ENCODE measurements at regions of chr6 and their contacts with region 1.

Region 1: GRCh38 chr6:46221222-46221793 is 50.5 kb upstream of the ENPP5 start:
- ATAC-seq: peak; percentile 52 to 82 (median 74)
- H3K4me3 ChIP-seq: no peak overlapping the region
- H3K27ac ChIP-seq: no peak overlapping the region
- H3K4me1 ChIP-seq: no peaks in the 10 kb centered on the region

Region 2: DNA sequence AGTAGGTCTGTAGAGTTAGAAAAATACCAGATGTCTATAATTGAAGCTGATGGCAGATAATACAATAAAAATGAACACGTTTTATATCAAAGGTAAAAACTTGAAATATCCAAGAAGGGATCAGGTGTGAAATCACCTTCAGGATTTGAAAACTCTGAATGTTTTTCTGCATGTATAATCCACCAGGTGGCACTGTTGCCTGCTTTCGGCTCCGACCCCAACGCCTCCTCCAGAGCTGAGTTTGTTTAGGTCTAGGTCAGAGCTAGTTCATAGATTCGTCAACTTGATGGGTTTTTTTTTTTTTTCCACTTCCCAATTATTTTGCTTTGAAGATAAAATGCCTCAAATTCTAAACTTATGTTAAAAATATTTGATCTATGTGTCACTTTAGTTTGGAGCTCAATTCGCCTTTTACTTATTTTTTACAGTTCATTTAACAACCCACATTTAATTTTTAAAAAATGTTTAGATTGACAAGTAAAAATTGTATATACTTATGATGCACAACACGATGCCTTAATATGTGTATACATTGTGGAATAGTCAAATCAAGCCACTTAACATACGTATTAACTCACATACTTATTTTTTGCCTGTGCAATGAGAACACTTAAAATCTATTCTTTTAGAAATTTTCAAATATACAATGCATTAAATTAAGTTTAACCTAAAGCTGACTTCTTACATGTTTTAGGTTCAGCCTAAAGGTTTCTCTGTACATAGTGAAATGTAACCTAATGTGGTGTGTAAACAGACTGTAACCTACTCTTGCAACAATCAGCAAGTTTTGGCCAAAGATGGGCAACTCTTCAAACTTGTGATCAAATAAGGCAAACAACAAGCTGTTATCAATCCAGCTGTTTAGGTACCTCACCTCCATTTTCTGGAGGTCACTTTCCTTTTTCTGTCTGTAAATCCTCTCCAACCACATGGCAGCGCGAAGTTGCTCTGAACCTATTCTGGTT is 130.9 kb before region 1 on chr6:
- in situ Hi-C with region 1: loop called in 1 of 9 experiments (anchors 25 kb)
- ATAC-seq: peak in 4 of 8 experiments; percentile 22 to 62 (median 39)
- H3K4me3 ChIP-seq: no peak overlapping the region
- H3K27ac ChIP-seq: no peak overlapping the region
- H3K4me1 ChIP-seq: no peaks in the 10 kb centered on the region

Region 3: GRCh38 chr6:46407776-46408530 is 186.6 kb after region 1 on chr6:
- in situ Hi-C with region 1: loop called in 2 of 9 experiments (anchors 10 to 25 kb)
- ATAC-seq: no peak
- H3K4me3 ChIP-seq: no peak overlapping the region
- H3K27ac ChIP-seq: no peak overlapping the region
- H3K4me1 ChIP-seq: no peaks in the 10 kb centered on the region